CD4-positive, alpha-beta T cell (primary cell): ENCODE measurements at regions of chr21 and their contacts with region 1.

Region 1: GRCh38 chr21:43829575-43830119 is 35.4 kb upstream of the AGPAT3 start:
- DNase-seq: no peak
- ATAC-seq: no peak
- H3K4me3 ChIP-seq: no peak overlapping the region
- H3K4me3 Mint-ChIP-seq: no peak overlapping the region
- H3K27ac ChIP-seq: no peak overlapping the region
- H3K27ac Mint-ChIP-seq: no peak overlapping the region
- H3K4me1 ChIP-seq: no peaks in the 10 kb centered on the region
- H3K4me1 Mint-ChIP-seq: no peaks in the 10 kb centered on the region
- H3K27me3 ChIP-seq: peaks cover 0 to 11% of the 10 kb centered on the region in 2 experiments
- H3K27me3 Mint-ChIP-seq: peaks cover 14% of the 10 kb centered on the region
- CTCF ChIP-seq: no peak

Region 2: DNA sequence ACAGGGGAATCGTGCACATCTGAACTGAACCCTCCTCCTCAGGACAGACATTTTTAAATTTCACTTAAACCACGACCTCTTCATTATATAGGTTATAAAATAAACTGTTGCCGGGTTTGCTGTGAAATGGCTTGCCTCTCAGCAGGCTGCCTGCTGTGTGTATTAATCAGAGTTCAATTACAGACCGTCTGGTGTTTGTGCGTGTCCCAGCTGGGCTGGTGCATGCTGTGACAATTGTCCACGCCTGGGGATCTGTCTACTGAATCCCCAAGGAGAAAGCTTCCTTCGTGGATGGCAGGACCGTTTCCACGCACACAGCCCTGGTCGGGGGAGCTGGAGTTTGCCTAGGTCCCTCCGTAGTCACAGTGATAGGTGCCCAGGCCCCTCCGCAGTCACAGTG is 21.9 kb after region 1 on chr21:
- CTCF ChIA-PET with region 1: no interaction called
- POLR2A ChIA-PET with region 1: no interaction called
- intact Hi-C with region 1: loop called in 1 of 2 experiments (anchors 2 kb)
- DNase-seq: no peak
- ATAC-seq: no peak
- H3K4me3 ChIP-seq: no peak overlapping the region
- H3K4me3 Mint-ChIP-seq: no peak overlapping the region
- H3K27ac ChIP-seq: no peak overlapping the region
- H3K27ac Mint-ChIP-seq: no peak overlapping the region
- H3K4me1 ChIP-seq: peaks cover 5% of the 10 kb centered on the region
- H3K4me1 Mint-ChIP-seq: no peaks in the 10 kb centered on the region
- H3K27me3 ChIP-seq: peaks cover 0 to 2% of the 10 kb centered on the region in 2 experiments
- H3K27me3 Mint-ChIP-seq: peaks cover 9% of the 10 kb centered on the region
- CTCF ChIP-seq: no peak

Region 3: GRCh38 chr21:43893536-43894205 is 64.0 kb after region 1 on chr21:
- CTCF ChIA-PET with region 1: no interaction called
- POLR2A ChIA-PET with region 1: no interaction called
- intact Hi-C with region 1: no loop called
- DNase-seq: peak in 3 of 14 experiments; percentile 34 to 41 (median 38)
- ATAC-seq: peak; percentile 64
- H3K4me3 ChIP-seq: peak overlapping the region; percentile 36
- H3K4me3 Mint-ChIP-seq: peak overlapping the region; percentile 32
- H3K27ac ChIP-seq: no peak overlapping the region
- H3K27ac Mint-ChIP-seq: peak overlapping the region; percentile 29
- H3K4me1 ChIP-seq: peaks cover 21% of the 10 kb centered on the region
- H3K4me1 Mint-ChIP-seq: peaks cover 49% of the 10 kb centered on the region
- H3K27me3 ChIP-seq: no peaks in the 10 kb centered on the region
- H3K27me3 Mint-ChIP-seq: no peaks in the 10 kb centered on the region
- CTCF ChIP-seq: no peak